GM12878 (cell line): ENCODE measurements at regions of chr21 and their contacts with region 1.

Region 1: DNA sequence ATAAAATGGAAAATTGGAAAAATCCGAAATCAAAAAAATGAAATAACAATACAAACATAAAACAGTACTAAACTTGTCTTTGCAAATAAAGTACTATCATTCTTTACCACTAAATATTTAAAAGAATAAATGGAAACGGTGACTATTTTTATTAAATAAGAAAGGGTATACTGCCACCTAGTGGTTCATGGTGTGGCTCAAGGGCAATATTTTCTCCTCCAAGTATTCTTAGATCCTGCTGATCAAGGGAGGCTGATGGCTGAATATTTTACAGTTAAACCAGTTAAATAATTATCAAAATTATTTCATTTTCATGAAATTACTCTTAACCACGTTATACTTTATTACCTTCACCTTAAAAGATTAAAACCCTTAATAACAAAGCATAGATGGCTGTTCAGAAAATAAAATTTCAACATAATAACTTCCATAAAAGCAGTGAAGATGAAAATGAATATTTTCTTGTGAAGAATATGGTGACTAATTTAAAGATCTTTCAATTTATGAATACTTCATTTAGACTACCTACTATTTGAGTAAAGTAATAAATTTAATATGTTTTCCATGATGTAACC is 1793.9 kb downstream of the NCAM2 start:
- DNase-seq: no peak
- ATAC-seq: no peak
- H3K4me3 ChIP-seq: no peak overlapping the region
- H3K27ac ChIP-seq: no peak overlapping the region
- H3K4me1 ChIP-seq: no peaks in the 10 kb centered on the region
- H3K27me3 ChIP-seq: no peaks in the 10 kb centered on the region
- CTCF ChIP-seq: peak; percentile 39 to 56 (median 50); a peak in 5 of 6 replicates
- EP300 ChIP-seq: no peak
- POLR2A ChIP-seq: no peak
- RAD21 ChIP-seq: peak; percentile 61

Region 2: DNA sequence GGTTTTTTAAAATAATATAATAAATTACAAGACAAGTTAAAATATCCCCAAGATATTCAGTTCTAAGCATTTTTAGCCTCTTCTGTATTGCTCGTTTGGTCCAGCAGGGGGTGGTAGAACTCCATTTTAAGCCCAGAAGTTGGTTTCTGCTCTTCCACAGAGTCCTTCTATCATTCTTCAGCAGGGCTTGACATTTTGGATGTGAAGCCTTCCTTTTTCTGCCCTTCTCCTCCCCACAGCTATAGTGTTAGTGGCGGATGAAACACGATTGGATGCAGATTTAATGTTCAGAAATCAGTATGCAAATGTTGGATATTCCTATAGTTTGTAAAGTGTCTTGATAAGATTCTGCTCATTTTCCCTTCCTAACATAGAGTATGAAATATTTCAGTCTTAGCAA is 1792.4 kb before region 1 on chr21:
- CTCF ChIA-PET with region 1: interaction called, 4 read pairs
- POLR2A ChIA-PET with region 1: no interaction called
- RAD21 ChIA-PET with region 1: no interaction called
- SMC1A ChIA-PET with region 1: no interaction called
- in situ Hi-C with region 1: loop called (anchors 25 kb)
- intact Hi-C with region 1: loop called (anchors 5 kb)
- DNase-seq: no peak
- ATAC-seq: no peak
- H3K4me3 ChIP-seq: no peak overlapping the region
- H3K27ac ChIP-seq: no peak overlapping the region
- H3K4me1 ChIP-seq: no peaks in the 10 kb centered on the region
- H3K27me3 ChIP-seq: no peaks in the 10 kb centered on the region; a peak in 1 of 4 replicates
- CTCF ChIP-seq: peak; percentile 53 to 62 (median 56); a peak in 4 of 6 replicates
- EP300 ChIP-seq: no peak
- POLR2A ChIP-seq: no peak
- RAD21 ChIP-seq: peak; percentile 78

Region 3: GRCh38 chr21:21163904-21164303 is 1628.2 kb before region 1 on chr21:
- CTCF ChIA-PET with region 1: interaction called, 3 read pairs
- POLR2A ChIA-PET with region 1: no interaction called
- RAD21 ChIA-PET with region 1: no interaction called
- SMC1A ChIA-PET with region 1: no interaction called
- in situ Hi-C with region 1: loop called (anchors 10 kb)
- intact Hi-C with region 1: loop called (anchors 1 kb)
- DNase-seq: no peak
- ATAC-seq: peak; percentile 44; the same call in 2 of the 3 replicates
- H3K4me3 ChIP-seq: no peak overlapping the region
- H3K27ac ChIP-seq: no peak overlapping the region
- H3K4me1 ChIP-seq: no peaks in the 10 kb centered on the region
- H3K27me3 ChIP-seq: no peaks in the 10 kb centered on the region
- CTCF ChIP-seq: peak; percentile 15 to 46 (median 35); a peak in 5 of 6 replicates
- EP300 ChIP-seq: no peak
- POLR2A ChIP-seq: no peak
- RAD21 ChIP-seq: peak; percentile 49

Region 4: DNA sequence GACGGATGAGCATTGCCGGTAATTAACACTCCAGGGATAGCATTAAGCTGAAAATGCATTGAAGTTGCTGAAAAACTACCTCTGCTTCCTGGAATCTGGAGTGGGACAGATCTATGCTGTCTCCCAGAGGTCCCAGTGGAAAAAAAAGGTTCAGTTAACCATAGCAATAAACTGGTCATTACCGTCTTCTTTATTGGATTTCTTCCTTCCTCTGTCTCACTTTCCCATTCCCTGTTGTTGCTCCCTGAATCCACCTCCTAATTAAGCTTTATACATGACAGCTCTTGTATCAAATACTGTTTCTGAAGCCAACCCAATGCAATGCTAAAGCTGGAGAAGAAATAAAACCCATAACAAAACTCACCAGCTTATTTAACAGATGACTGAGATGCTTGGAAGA is 12.1 kb after region 1 on chr21:
- CTCF ChIA-PET with region 1: interaction called, 12 read pairs
- POLR2A ChIA-PET with region 1: no interaction called
- RAD21 ChIA-PET with region 1: no interaction called
- SMC1A ChIA-PET with region 1: no interaction called
- in situ Hi-C with region 1: no loop called
- intact Hi-C with region 1: no loop called
- DNase-seq: no peak
- ATAC-seq: no peak
- H3K4me3 ChIP-seq: no peak overlapping the region
- H3K27ac ChIP-seq: no peak overlapping the region
- H3K4me1 ChIP-seq: no peaks in the 10 kb centered on the region
- H3K27me3 ChIP-seq: no peaks in the 10 kb centered on the region
- CTCF ChIP-seq: no peak
- EP300 ChIP-seq: no peak
- POLR2A ChIP-seq: no peak
- RAD21 ChIP-seq: no peak

Region 5: DNA sequence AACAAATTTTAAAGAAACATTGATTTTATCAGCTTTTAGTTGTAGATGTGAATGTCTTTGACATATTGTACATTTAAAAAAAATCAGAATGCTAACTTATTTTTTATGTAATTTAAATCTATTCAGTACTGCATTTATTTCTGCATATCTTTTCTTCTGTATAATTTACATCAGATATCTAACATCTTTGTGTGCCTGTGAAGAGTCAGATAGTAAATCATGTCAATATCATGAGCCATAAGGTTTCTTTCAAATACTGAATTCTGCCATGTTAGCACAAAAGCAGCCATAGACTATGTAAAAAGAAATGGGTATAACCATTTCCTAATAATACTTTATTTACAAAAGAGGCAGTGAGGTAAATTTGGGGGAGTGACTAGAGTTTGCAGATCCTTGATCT is 35.3 kb after region 1 on chr21:
- CTCF ChIA-PET with region 1: no interaction called
- POLR2A ChIA-PET with region 1: no interaction called
- RAD21 ChIA-PET with region 1: no interaction called
- SMC1A ChIA-PET with region 1: no interaction called
- in situ Hi-C with region 1: no loop called
- intact Hi-C with region 1: no loop called
- DNase-seq: no peak
- ATAC-seq: no peak
- H3K4me3 ChIP-seq: no peak overlapping the region
- H3K27ac ChIP-seq: no peak overlapping the region
- H3K4me1 ChIP-seq: no peaks in the 10 kb centered on the region
- H3K27me3 ChIP-seq: no peaks in the 10 kb centered on the region
- CTCF ChIP-seq: no peak
- EP300 ChIP-seq: no peak
- POLR2A ChIP-seq: no peak
- RAD21 ChIP-seq: no peak